ENCODE measurements at regions of chr16 and their contacts with region 1.

Region 1: DNA sequence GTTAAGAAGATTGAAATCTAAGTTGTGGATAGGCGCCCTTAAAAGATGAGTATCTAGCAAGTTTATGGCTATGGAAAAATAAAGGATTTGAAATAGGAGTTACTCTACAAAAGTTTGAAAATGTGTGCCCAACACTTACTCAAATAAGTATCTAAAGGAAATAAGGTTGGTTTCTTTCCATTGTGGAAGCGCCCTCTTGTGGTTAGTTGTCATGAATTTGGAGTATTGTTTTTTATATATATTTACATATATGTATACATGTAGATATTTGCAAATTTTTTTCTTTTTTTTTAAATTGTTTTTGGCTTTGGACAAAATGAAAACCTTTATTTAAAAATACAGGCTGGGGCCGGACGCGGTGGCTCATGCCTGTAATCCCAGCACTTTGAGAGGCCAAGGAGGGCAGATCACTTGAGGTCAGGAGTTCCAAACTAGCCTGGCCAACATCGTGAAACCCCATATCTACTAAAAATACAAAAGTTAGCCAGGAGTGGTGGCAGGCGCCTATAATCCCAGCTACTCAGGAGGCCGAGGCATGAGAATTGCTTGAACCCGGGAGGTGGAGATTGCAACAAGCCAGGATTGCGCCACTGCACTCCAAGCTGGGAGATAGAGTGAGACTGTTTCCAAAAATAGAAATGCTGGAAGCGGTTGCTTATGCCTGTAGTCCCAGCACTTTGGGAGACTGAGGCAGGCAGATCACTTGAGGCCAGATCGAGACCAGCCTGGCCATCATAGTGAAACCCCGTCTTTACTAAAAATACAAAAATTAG is 24.0 kb upstream of the VPS4A start:
- DNase-seq: peak; percentile 55
- ATAC-seq: peak; percentile 27
- H3K4me3 Mint-ChIP-seq: no peak overlapping the region
- H3K27ac Mint-ChIP-seq: no peak overlapping the region
- H3K4me1 Mint-ChIP-seq: peaks cover 3% of the 10 kb centered on the region
- H3K27me3 Mint-ChIP-seq: no peaks in the 10 kb centered on the region
- CTCF ChIP-seq: peak; percentile 86

Region 2: DNA sequence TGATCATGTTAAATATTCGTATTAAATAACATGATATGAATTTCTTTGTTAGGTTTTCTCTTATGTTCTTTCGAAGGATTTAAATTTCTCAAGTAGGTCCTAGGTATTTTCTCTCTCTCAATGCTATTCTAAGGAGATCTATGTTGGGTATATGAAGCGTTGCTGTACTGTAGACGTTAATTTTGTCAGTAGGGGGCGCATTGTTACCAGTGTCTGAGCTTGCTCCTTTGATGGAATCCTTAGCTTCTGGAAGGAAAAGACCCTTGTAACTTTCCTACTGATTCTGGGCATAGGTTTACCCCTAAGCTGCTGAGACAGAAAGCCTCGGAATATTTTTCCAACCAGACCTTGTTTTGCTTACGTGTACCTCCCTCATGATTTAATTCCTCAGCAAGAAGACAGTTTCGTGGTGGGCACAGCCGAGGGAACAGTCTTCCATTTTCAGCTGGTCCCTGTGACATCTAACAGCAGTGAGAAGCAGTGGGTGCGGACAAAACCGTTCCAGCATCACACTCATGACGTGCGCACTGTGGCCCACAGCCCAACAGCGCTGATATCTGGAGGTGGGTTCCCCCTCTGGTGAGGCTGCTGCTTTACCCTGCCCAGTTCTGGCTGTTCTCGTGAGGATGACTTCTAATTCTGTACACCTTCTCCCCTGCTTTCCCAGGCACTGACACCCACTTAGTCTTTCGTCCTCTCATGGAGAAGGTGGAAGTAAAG is 136.8 kb before region 1 on chr16:
- CTCF ChIA-PET with region 1: interaction called, 77 read pairs
- POLR2A ChIA-PET with region 1: no interaction called
- intact Hi-C with region 1: loop called (anchors 5 kb)
- DNase-seq: peak; percentile 66
- ATAC-seq: peak; percentile 79
- H3K4me3 Mint-ChIP-seq: no peak overlapping the region
- H3K27ac Mint-ChIP-seq: no peak overlapping the region
- H3K4me1 Mint-ChIP-seq: peaks cover under 1% of the 10 kb centered on the region
- H3K27me3 Mint-ChIP-seq: no peaks in the 10 kb centered on the region
- CTCF ChIP-seq: peak; percentile 80

Region 3: GRCh38 chr16:69223882-69224281 is 63.2 kb before region 1 on chr16:
- CTCF ChIA-PET with region 1: no interaction called
- POLR2A ChIA-PET with region 1: no interaction called
- intact Hi-C with region 1: no loop called
- DNase-seq: no peak
- ATAC-seq: no peak
- H3K4me3 Mint-ChIP-seq: no peak overlapping the region
- H3K27ac Mint-ChIP-seq: no peak overlapping the region
- H3K4me1 Mint-ChIP-seq: peaks cover 2% of the 10 kb centered on the region
- H3K27me3 Mint-ChIP-seq: no peaks in the 10 kb centered on the region
- CTCF ChIP-seq: no peak

Measured in activated CD8-positive, alpha-beta T cell treated with anti-CD3 and anti-CD28 coated beads for 36 hours (primary cell).